Breast epithelium (tissue), 4 donors: ENCODE measurements at regions of chr11 and their contacts with region 1.

Region 1: DNA sequence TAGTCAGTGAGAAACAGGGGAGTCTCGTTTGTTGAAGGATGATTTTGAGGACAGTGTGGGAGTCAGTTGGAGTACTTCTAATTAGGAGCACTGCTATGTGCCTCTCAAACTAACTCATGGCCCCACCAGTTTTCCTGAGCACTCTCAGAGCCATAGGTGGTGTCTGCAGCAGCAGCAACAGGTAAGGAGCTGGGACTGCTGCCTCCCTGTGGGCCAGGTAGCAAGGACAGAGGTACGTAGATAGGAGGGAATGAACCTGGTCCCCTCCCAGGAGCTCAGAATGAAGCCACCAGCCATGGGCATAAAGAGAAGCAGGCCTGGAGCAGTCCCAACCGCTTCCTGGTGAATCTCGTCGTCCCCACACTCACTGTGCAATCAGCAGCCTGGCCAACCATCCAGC is 183.4 kb downstream of the BUD13 start:
- DNase-seq: no peak
- H3K4me3 ChIP-seq: no peak overlapping the region
- H3K27ac ChIP-seq: no peak overlapping the region
- H3K4me1 ChIP-seq: no peaks in the 10 kb centered on the region
- H3K27me3 ChIP-seq: no peaks in the 10 kb centered on the region
- CTCF ChIP-seq: no peak
- POLR2A ChIP-seq: no peak

Region 2: DNA sequence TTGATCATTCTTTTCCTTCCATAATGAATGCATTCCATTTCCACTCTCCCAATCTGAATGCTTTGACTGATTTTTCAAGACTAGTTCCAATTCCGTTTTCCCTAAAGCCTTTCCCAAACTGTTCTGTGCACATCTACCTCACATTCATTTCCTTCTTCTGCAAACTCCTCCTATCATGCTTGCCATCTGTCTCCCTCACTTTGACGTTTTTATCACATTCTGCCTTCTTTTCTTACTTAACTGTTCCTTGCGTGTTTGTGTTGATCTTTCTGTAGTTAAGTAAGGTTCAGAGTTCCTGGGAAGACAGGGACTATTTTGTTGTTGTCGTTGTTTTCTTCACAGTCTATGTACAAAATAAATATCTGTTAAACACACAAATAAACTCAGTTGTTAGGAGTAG is 1732.1 kb before region 1 on chr11:
- intact Hi-C with region 1: no loop called
- DNase-seq: no peak
- H3K4me3 ChIP-seq: no peak overlapping the region
- H3K27ac ChIP-seq: no peak overlapping the region
- H3K4me1 ChIP-seq: no peaks in the 10 kb centered on the region
- H3K27me3 ChIP-seq: peaks cover 0 to 5% of the 10 kb centered on the region in 2 donors
- CTCF ChIP-seq: no peak
- POLR2A ChIP-seq: no peak

Region 3: DNA sequence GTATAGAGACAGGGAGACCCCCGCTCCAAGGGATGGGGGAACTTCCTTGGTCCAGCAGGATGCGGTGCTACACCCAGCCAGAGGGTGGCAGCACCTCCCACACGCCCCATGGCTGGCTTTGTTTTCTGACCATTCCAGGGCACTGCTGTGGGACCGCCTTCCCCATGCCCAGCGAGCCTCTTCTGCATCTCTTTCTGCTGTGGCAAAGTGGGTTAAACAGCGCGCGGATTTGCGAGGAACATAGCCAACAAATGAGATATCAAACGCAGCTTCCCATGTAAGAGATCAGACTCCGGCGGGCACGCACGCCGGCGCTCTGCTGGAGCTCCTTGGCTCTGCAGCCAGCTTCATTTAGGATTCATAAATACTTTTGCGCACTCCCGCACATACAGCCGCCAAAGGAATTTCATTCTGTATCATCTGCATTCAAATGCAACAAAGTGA is 599.4 kb before region 1 on chr11:
- intact Hi-C with region 1: no loop called
- DNase-seq: no peak
- H3K4me3 ChIP-seq: no peak overlapping the region
- H3K27ac ChIP-seq: no peak overlapping the region
- H3K4me1 ChIP-seq: no peaks in the 10 kb centered on the region
- H3K27me3 ChIP-seq: no peaks in the 10 kb centered on the region
- CTCF ChIP-seq: peak in 2 of 3 donors; percentile 41
- POLR2A ChIP-seq: no peak

Region 4: DNA sequence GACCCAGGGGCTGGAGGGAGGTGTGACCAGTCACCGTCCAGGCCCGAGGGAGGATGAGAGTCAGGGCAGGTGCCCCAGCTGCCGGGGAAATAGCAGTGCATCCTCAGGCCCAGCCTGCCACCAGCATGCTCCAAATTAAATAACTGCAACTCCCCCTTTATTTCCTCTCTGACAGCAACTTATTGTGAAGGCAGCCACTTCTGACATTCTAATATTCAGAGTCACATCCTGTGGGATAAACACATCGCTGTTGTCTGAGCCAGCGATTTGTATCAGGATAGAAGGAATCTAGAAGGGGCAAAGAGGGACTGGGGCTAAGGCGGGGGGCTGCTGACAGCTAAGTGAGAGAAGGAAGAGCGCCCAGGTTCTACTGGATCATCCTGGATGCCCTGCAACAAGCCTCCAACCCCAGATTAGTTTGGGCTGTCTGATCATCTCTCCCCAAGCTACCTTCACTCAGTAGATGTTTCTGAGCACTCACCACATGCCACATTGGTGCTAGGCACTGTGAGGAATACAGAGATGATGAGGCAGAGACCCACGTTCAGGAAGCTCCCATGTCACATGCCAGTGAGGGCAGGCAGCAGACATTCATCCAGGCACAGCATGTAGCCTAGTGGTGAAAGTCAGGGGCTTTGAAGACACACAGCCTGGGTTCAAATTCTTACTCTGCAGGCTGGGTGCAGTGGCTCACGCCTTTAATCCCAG is 30.7 kb before region 1 on chr11:
- intact Hi-C with region 1: loop called (anchors 1 kb)
- DNase-seq: no peak
- H3K4me3 ChIP-seq: no peak overlapping the region
- H3K27ac ChIP-seq: no peak overlapping the region
- H3K4me1 ChIP-seq: no peaks in the 10 kb centered on the region
- H3K27me3 ChIP-seq: no peaks in the 10 kb centered on the region
- CTCF ChIP-seq: no peak
- POLR2A ChIP-seq: no peak